ENCODE measurements at regions of chr19 and their contacts with region 1.

Region 1: DNA sequence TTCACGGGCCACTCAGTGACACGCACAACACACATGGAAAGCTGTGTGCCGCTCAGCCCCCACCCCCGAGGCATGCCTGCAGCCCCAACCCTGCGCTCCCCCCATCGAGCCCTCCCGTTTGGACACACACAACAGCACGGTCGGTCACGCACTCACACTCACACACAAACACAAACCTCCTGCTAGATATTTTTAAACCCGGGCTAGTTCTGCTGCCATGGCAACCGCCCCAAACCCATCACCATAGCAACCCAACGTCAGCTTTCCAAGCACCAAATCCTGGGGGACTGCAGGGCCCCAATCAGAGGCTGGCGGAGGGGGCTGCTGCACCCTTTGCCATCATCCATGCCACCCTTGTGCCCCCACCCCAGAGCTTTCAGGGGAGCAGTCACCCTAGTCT is 2.5 kb upstream of the NOVA2 start:
- DNase-seq: no peak
- ATAC-seq: no peak
- H3K4me3 ChIP-seq: no peak overlapping the region
- H3K27ac ChIP-seq: no peak overlapping the region
- H3K4me1 ChIP-seq: no peaks in the 10 kb centered on the region; the same call in 1 of the 2 replicates
- H3K27me3 ChIP-seq: no peaks in the 10 kb centered on the region
- CTCF ChIP-seq: no peak

Region 2: DNA sequence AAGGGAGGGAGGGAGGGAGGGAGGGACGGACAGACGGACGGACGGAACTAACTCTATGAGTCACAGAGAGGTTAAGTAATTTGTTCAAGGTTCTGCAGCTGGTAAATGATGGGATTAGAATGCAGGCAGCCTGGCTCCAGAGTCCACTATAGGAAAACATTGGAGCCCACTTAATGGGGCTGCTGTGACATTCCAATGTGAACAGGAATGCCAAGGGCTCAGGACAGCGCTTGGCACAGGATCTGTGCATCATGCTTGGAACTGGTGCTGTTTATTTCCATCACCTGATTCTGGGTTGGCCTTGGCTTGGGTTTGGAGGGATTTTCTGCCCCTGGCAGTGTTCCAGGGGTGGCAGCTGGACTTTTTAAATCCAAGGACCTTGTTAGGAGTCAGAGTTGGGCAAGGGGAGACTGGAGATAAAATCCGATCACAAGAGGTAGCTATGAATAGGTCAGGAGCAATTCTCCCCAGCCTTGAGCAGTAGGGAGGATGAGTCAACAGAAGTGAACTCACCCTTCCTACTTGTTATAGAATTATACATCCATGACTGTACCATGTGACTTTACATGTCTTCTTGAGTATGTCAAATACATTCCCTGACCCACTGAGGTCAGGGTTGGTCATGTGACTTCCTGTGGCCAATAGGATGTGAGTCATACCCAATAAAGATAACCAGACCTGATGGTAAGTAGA is 312.9 kb after region 1 on chr19:
- CTCF ChIA-PET with region 1: no interaction called
- POLR2A ChIA-PET with region 1: interaction called, 10 read pairs
- intact Hi-C with region 1: no loop called
- DNase-seq: peak; percentile 90
- ATAC-seq: peak; percentile 99
- H3K4me3 ChIP-seq: peak overlapping the region; percentile 32; the same call in 1 of the 2 replicates
- H3K27ac ChIP-seq: peak overlapping the region; percentile 82
- H3K4me1 ChIP-seq: peaks cover 10% of the 10 kb centered on the region
- H3K27me3 ChIP-seq: no peaks in the 10 kb centered on the region
- CTCF ChIP-seq: no peak